Activated B cell treated with CpG ODN at 0.5 μM for 24 hours (primary cell): ENCODE measurements at regions of chr22 and their contacts with region 1.

Region 1: DNA sequence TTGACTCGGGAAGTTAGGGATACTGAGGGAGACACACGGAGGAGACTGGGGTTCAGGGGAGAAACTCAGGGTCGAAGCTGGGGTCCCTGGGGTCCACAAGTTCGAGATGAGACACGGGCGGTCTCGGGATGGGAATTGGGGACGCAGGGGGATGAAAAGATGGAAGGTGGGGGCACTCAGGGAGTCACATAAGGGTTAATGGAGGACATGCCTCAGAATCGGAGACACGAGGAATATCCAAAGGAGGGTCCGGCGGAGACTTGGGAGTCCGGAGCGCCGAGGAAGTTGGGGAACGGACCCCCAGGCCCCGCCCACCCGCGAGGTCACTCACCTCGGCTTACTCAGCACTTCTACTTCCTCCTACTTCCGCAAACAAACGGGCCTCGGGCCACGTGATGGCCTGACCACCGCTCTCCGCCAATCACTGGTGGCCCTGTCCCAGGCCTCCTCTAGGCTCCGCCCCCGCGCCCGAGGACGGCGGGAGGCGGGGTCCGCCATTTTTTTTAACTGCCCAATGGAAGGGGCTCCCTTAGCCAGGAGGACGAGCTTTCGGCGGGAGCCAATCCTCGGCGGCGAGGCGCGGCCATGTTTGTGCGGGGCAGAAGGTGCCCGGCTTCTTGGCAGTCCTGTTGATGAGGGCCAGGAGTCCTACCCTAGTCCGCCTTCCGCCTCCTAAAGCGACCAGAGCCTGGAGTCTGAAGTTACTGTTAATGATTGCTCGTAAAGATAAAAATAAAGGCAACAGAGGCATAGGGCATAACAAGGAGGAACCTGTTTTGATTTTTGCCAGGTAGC is at the start of gene PLA2G6:
- DNase-seq: peak; percentile 97
- ATAC-seq: peak; percentile 97
- H3K4me3 Mint-ChIP-seq: peak within 1 kb of the TSS; percentile 92
- H3K27ac Mint-ChIP-seq: peak within 1 kb of the TSS; percentile 85
- H3K4me1 Mint-ChIP-seq: peaks cover 43% of the 10 kb centered on the region
- H3K27me3 Mint-ChIP-seq: peaks cover 4% of the 10 kb centered on the region
- CTCF ChIP-seq: no peak
- total RNA-seq, gene PLA2G6: 53.0 and 64.0 TPM in 2 replicates

Region 2: GRCh38 chr22:37940698-37941376 is 240.8 kb before region 1 on chr22:
- CTCF ChIA-PET with region 1: no interaction called
- POLR2A ChIA-PET with region 1: no interaction called
- intact Hi-C with region 1: no loop called
- DNase-seq: no peak
- ATAC-seq: peak; percentile 47
- H3K4me3 Mint-ChIP-seq: no peak overlapping the region
- H3K27ac Mint-ChIP-seq: no peak overlapping the region
- H3K4me1 Mint-ChIP-seq: no peaks in the 10 kb centered on the region
- H3K27me3 Mint-ChIP-seq: no peaks in the 10 kb centered on the region
- CTCF ChIP-seq: no peak

Region 3: DNA sequence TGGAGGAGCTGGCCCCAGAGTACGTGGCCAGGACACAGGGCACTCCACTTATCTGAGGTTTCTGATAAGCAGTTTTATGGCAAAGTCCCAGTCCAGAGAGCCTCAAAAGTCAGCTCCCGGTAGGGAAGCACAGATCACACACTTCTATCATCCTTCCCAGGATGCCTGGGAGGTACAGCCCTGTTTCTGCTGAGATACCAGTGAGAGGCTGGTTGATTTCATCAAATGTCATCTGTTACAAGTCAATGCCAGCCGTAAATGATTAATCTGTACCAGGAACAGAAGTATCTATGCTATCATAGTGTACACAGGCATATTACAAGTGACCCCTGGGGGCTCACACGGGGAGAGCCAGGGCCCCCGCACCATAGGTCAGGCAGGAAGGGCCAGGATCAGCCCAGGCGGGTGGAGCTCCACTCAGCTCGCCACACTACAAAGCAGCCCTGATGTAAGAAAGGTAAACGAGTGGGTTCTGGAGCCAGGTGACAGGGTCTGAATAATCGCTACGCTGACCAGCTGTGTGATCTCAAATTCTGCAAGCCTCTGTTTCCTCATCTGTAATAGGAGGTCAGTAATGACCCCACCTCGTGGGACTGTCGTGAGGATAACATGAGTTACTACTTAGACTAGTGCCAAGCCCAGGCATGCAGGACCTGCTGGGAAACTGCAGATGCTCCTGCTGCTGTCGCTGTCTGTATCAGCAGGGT is 17.7 kb before region 1 on chr22:
- CTCF ChIA-PET with region 1: no interaction called
- POLR2A ChIA-PET with region 1: interaction called, 11 read pairs
- intact Hi-C with region 1: loop called (anchors 1 kb)
- DNase-seq: no peak
- ATAC-seq: no peak
- H3K4me3 Mint-ChIP-seq: no peak overlapping the region
- H3K27ac Mint-ChIP-seq: peak overlapping the region; percentile 79
- H3K4me1 Mint-ChIP-seq: peaks cover 40% of the 10 kb centered on the region
- H3K27me3 Mint-ChIP-seq: no peaks in the 10 kb centered on the region
- CTCF ChIP-seq: no peak

Region 4: GRCh38 chr22:38214256-38215056 is 32.8 kb after region 1 on chr22:
- CTCF ChIA-PET with region 1: no interaction called
- POLR2A ChIA-PET with region 1: interaction called, 9 read pairs
- intact Hi-C with region 1: loop called (anchors 2 kb)
- DNase-seq: peak; percentile 68
- ATAC-seq: peak; percentile 89
- H3K4me3 Mint-ChIP-seq: peak overlapping the region; percentile 71
- H3K27ac Mint-ChIP-seq: peak overlapping the region; percentile 18
- H3K4me1 Mint-ChIP-seq: peaks cover 24% of the 10 kb centered on the region
- H3K27me3 Mint-ChIP-seq: no peaks in the 10 kb centered on the region
- CTCF ChIP-seq: no peak